SK-N-SH (cell line): ENCODE measurements at regions of chr1 and their contacts with region 1.

Region 1: GRCh38 chr1:228131766-228132165 is 8.3 kb upstream of the GUK1 start:
- DNase-seq: no peak
- H3K4me3 ChIP-seq: no peak overlapping the region
- H3K27ac ChIP-seq: no peak overlapping the region
- H3K4me1 ChIP-seq: no peaks in the 10 kb centered on the region
- H3K27me3 ChIP-seq: peaks cover 28% of the 10 kb centered on the region; the same call in 1 of the 2 replicates
- CTCF ChIP-seq: no peak
- EP300 ChIP-seq: no peak
- RAD21 ChIP-seq: no peak

Region 2: GRCh38 chr1:228109073-228109961 is 22.4 kb before region 1 on chr1 and contains the start of gene MRPL55:
- CTCF ChIA-PET with region 1: interaction called, 31 read pairs
- POLR2A ChIA-PET with region 1: no interaction called
- DNase-seq: peak; percentile 96
- H3K4me3 ChIP-seq: peak within 1 kb of the TSS; percentile 100
- H3K27ac ChIP-seq: peak within 1 kb of the TSS; percentile 49 to 79; a peak in 3 of 4 replicates
- H3K4me1 ChIP-seq: peaks cover 4 to 27% of the 10 kb centered on the region in 2 experiments; a peak in 3 of 4 replicates
- H3K27me3 ChIP-seq: no peaks in the 10 kb centered on the region
- CTCF ChIP-seq: peak; percentile 27; the same call in 1 of the 2 replicates
- EP300 ChIP-seq: no peak
- RAD21 ChIP-seq: no peak
- polyA plus RNA-seq, gene MRPL55: 70.3 and 75.3 TPM in 2 replicates

Region 3: GRCh38 chr1:228120857-228121489 is 10.8 kb before region 1 on chr1:
- CTCF ChIA-PET with region 1: interaction called, 36 read pairs
- POLR2A ChIA-PET with region 1: no interaction called
- DNase-seq: no peak
- H3K4me3 ChIP-seq: no peak overlapping the region
- H3K27ac ChIP-seq: no peak overlapping the region
- H3K4me1 ChIP-seq: no peaks in the 10 kb centered on the region
- H3K27me3 ChIP-seq: no peaks in the 10 kb centered on the region
- CTCF ChIP-seq: no peak
- EP300 ChIP-seq: no peak
- RAD21 ChIP-seq: no peak

Region 4: DNA sequence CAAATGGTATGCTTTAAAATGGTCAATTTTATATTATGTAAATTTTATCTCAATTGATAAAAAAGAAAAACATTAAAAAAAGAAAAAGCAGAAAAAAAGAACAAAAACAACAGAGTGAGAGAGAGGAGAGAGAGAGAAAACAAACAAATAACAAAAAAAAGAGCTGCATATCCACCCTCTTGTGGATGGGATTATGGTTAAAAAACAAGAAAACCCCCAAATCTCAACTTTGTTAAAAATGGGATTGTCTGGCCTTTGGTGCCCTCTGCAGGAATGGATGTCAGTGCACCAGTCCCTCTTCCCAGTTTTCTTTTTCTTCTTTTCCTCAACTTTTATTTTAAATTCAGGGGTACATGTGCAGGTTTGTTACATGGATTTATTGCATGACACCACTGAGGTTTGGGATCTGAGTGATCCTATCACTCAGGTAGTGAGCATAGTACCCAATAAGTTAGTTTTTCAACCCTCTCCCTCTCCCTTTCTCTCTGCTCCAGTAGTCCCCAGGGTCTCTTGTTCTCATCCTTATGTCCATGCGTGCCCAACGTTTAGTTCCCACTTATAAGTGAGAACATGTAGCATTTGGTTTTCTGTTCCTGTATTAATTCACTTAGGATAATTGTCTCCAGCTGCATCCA is 383.6 kb after region 1 on chr1:
- CTCF ChIA-PET with region 1: interaction called, 10 read pairs
- POLR2A ChIA-PET with region 1: no interaction called
- DNase-seq: peak; percentile 76
- H3K4me3 ChIP-seq: peak overlapping the region in 1 of 2 experiments; percentile 35; a peak in 1 of 4 replicates
- H3K27ac ChIP-seq: no peak overlapping the region
- H3K4me1 ChIP-seq: no peaks in the 10 kb centered on the region
- H3K27me3 ChIP-seq: peaks cover 39% of the 10 kb centered on the region
- CTCF ChIP-seq: peak; percentile 87
- EP300 ChIP-seq: no peak
- RAD21 ChIP-seq: peak; percentile 85